ENCODE measurements at regions of chr12 and their contacts with region 1.

Region 1: GRCh38 chr12:52870351-52871290 is 21.8 kb upstream of the KRT78 start:
- DNase-seq: peak; percentile 65
- H3K4me3 ChIP-seq: no peak overlapping the region
- H3K27ac ChIP-seq: no peak overlapping the region
- H3K4me1 ChIP-seq: peaks cover 17% of the 10 kb centered on the region
- CTCF ChIP-seq: peak; percentile 96

Region 2: GRCh38 chr12:52582971-52583456 is 287.6 kb before region 1 on chr12:
- CTCF ChIA-PET with region 1: interaction called, 3 read pairs
- POLR2A ChIA-PET with region 1: no interaction called
- intact Hi-C with region 1: loop called (anchors 2 kb)
- DNase-seq: peak; percentile 36
- H3K4me3 ChIP-seq: no peak overlapping the region
- H3K27ac ChIP-seq: no peak overlapping the region
- H3K4me1 ChIP-seq: no peaks in the 10 kb centered on the region
- CTCF ChIP-seq: peak; percentile 77

Region 3: DNA sequence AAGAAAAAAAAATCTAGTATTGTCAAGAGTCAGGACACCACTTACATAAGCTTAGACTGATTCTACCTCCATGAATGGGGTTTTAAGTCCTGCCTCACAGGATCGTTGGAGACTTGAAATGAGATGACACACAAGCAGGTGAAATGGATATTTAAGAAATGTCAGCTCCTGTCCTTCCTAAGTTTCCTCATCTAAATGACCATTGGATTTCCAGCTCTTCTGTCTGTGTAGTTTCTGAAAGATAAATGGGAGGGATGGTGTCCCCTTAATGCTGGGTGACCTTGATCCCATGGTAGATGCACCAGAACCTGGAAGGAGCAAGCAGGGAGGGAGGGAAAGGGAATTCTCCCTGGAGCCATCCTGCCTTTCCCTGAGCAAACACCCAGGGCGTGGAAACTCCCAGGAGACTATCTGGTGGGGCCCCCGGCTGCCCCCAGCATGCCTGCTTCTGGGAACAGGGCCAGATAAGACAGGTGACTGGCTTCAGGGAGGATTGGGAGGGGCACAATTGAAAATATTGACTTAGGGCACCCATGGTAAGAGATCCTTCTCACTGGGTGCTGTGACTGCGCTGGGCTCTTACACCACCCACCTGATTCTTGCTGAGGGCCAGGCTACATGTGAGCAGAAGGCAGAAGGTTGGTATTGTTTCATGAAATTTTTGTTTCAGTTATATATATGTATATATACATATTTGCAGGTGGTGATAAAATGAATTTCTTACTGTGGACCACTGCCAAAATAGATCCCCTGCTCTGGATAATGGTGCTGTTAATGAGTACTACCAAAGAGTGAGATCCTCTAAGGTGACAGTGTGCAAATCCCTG is 24.7 kb after region 1 on chr12:
- CTCF ChIA-PET with region 1: no interaction called
- POLR2A ChIA-PET with region 1: no interaction called
- intact Hi-C with region 1: no loop called
- DNase-seq: no peak
- H3K4me3 ChIP-seq: no peak overlapping the region
- H3K27ac ChIP-seq: no peak overlapping the region
- H3K4me1 ChIP-seq: no peaks in the 10 kb centered on the region
- CTCF ChIP-seq: no peak

Region 4: GRCh38 chr12:53221203-53222080 is 350.8 kb after region 1 on chr12:
- CTCF ChIA-PET with region 1: no interaction called
- POLR2A ChIA-PET with region 1: no interaction called
- intact Hi-C with region 1: no loop called
- DNase-seq: peak; percentile 65
- H3K4me3 ChIP-seq: peak overlapping the region; percentile 74
- H3K27ac ChIP-seq: peak overlapping the region; percentile 90
- H3K4me1 ChIP-seq: peaks cover 66% of the 10 kb centered on the region
- CTCF ChIP-seq: peak; percentile 74

Measured in OCI-LY7 (cell line).